ENCODE measurements at regions of chr13 and their contacts with region 1.

Region 1: GRCh38 chr13:79541426-79542049 is 60.6 kb downstream of the NDFIP2 start:
- DNase-seq: peak; percentile 55
- H3K4me3 ChIP-seq: no peak overlapping the region
- H3K27ac ChIP-seq: no peak overlapping the region
- H3K4me1 ChIP-seq: no peaks in the 10 kb centered on the region
- H3K27me3 ChIP-seq: no peaks in the 10 kb centered on the region

Region 2: GRCh38 chr13:79427265-79427664 is 114.3 kb before region 1 on chr13:
- in situ Hi-C with region 1: loop called (anchors 5 kb)
- DNase-seq: no peak
- H3K4me3 ChIP-seq: no peak overlapping the region
- H3K27ac ChIP-seq: no peak overlapping the region
- H3K4me1 ChIP-seq: peaks cover 5% of the 10 kb centered on the region; the same call in 1 of the 2 replicates
- H3K27me3 ChIP-seq: no peaks in the 10 kb centered on the region